ENCODE measurements at regions of chr4 and their contacts with region 1.

Region 1: GRCh38 chr4:102826890-102827673 is at the start of gene UBE2D3:
- DNase-seq: peak; percentile 45
- ATAC-seq: peak; percentile 58
- H3K4me3 ChIP-seq: peak within 1 kb of the TSS; percentile 89
- H3K27ac ChIP-seq: peak within 1 kb of the TSS; percentile 99
- H3K4me1 ChIP-seq: peaks cover 4% of the 10 kb centered on the region; the same call in 1 of the 2 replicates
- H3K27me3 ChIP-seq: no peaks in the 10 kb centered on the region
- CTCF ChIP-seq: peak; percentile 7 to 27 (median 15); a peak in 3 of 6 replicates
- EP300 ChIP-seq: peak; percentile 33 to 41; a peak in 2 of 4 replicates
- POLR2A ChIP-seq: peak; percentile 93
- RAD21 ChIP-seq: 0 out of 2 replicates have a peak, but pooled peaks have one; percentile 7
- polyA plus RNA-seq, gene UBE2D3: 162 to 186 TPM

Region 2: GRCh38 chr4:102344954-102345794 is 481.9 kb before region 1 on chr4 and contains the start of gene SLC39A8:
- CTCF ChIA-PET with region 1: interaction called, 3 read pairs
- POLR2A ChIA-PET with region 1: no interaction called
- RAD21 ChIA-PET with region 1: no interaction called
- SMC1A ChIA-PET with region 1: no interaction called
- in situ Hi-C with region 1: no loop called
- intact Hi-C with region 1: loop called (anchors 10 kb)
- DNase-seq: peak; percentile 91
- ATAC-seq: peak; percentile 87
- H3K4me3 ChIP-seq: peak within 1 kb of the TSS; percentile 72
- H3K27ac ChIP-seq: peak within 1 kb of the TSS; percentile 87
- H3K4me1 ChIP-seq: peaks cover 11% of the 10 kb centered on the region
- H3K27me3 ChIP-seq: no peaks in the 10 kb centered on the region
- CTCF ChIP-seq: peak; percentile 84 to 87 (median 86)
- EP300 ChIP-seq: peak; percentile 42 to 69; a peak in 3 of 4 replicates
- POLR2A ChIP-seq: peak; percentile 66
- RAD21 ChIP-seq: peak; percentile 54
- polyA plus RNA-seq, gene SLC39A8: 7.9 to 16.6 TPM

Region 3: DNA sequence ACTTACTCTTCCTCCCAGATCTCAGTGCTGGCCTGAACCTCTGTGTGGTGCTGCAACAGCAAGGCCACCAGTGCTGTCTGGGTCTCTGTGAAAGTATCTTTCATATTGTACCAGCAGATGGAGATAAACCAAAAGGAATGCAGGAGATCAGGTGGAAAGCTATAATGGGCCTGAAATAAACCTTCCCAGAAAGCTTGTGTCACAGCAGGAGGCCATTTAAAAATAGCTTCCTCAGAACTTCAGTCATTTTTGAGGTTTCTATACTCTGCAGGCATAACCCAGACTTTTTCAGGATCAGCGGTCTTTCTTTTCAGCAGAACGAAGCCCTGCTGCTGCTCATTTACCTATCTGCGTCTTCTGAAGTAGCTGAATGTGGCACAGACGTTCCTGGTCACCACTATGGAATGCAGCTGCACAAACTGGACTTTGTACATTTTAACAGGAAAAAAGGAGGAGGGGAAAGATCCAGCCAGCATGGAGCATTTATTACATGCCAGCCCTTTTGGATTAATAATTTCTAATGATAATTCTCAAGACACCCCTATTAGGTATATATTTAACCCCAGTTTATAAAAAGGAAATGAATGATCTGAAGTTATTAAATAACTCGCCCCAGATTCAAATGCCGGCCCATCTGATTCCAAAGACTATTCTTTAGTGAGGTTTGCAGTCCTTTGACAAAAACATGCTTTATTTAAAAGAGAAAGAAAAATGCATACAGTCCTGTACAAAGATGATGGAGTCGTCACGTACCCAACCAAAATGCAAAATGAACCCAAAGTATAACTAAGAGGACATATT is 206.2 kb before region 1 on chr4:
- CTCF ChIA-PET with region 1: interaction called, 10 read pairs
- POLR2A ChIA-PET with region 1: interaction called, 3 read pairs
- RAD21 ChIA-PET with region 1: interaction called, 3 read pairs
- SMC1A ChIA-PET with region 1: interaction called, 5 read pairs
- in situ Hi-C with region 1: no loop called
- intact Hi-C with region 1: no loop called
- DNase-seq: no peak
- ATAC-seq: peak; percentile 70
- H3K4me3 ChIP-seq: no peak overlapping the region
- H3K27ac ChIP-seq: no peak overlapping the region
- H3K4me1 ChIP-seq: peaks cover 3% of the 10 kb centered on the region; the same call in 1 of the 2 replicates
- H3K27me3 ChIP-seq: no peaks in the 10 kb centered on the region
- CTCF ChIP-seq: peak; percentile 30 to 51 (median 45); a peak in 5 of 6 replicates
- EP300 ChIP-seq: no peak
- POLR2A ChIP-seq: no peak
- RAD21 ChIP-seq: peak; percentile 78

Region 4: DNA sequence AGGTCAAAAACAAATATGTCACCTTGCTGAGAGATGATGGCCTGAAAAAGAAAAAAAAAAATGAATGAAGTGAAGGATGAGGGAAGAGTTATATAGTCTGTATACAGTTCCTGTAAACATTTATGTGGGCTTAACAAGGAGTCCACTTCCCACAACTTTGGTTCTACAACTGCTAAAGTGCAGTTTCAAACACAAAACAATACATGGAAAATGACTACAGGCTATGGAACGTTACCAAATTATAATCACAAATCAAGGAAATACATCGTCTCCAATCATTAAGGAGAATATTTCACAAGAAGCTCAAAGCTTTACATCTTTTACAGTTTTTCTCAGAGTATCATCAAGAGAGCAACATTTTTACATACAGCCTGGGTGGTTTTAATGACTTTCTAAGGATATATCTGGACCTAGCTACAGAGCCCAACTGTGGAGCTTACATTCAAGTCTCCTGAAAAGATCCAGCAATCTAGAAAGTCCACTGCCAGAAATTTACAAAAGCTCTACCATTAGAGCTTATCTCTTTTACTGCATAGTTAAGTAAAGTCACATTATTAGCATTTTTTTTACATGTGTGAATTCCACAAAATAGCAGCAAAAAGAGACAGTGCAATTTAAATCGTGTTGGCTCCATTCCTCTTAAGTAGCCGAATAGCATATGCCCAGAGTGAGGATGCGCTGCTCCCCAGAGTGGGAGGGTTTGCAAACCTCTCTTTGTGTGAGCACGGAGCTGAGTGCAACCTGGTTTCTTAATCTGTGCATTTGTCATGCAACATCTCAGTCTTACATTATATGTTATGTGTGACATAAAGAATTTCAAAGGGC is 194.6 kb before region 1 on chr4:
- CTCF ChIA-PET with region 1: no interaction called
- POLR2A ChIA-PET with region 1: no interaction called
- RAD21 ChIA-PET with region 1: no interaction called
- SMC1A ChIA-PET with region 1: no interaction called
- in situ Hi-C with region 1: no loop called
- intact Hi-C with region 1: no loop called
- DNase-seq: no peak
- ATAC-seq: no peak
- H3K4me3 ChIP-seq: no peak overlapping the region
- H3K27ac ChIP-seq: no peak overlapping the region
- H3K4me1 ChIP-seq: no peaks in the 10 kb centered on the region
- H3K27me3 ChIP-seq: no peaks in the 10 kb centered on the region
- CTCF ChIP-seq: no peak
- EP300 ChIP-seq: no peak
- POLR2A ChIP-seq: no peak
- RAD21 ChIP-seq: no peak

Region 5: DNA sequence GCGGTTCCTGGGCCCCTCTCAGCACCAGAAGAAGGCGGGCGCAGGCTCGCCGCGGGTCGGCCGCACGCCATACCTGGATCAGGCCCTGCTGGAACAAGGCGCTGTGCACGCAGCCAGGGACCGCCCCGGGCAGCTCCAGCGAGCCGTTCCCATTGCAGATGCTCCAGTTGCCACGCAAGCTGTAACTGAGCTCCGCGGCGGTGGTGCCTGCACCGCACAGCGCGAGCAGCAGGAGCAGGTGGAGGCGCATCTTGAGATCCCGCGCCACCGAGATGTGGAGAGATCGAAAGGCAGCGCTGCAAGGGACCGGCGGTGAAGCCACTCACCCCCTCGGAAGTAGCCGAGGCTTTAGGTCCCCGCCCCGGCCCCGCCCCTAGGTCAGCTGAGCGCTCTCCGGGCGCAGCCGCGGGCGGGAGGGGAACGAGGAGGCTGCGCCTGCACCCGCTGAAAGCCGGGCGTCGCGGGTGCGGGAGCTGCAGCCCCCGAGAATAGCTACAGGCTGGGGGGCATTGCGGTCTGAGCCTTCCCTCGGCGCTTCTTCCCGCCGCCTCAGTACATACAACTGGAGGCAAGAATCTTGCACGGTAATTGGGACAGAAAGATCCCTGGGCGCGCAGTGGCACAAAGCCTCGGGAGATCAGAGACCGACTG is 66.3 kb before region 1 on chr4 and contains the start of gene MANBA:
- CTCF ChIA-PET with region 1: interaction called, 6 read pairs
- POLR2A ChIA-PET with region 1: interaction called, 11 read pairs
- RAD21 ChIA-PET with region 1: interaction called, 8 read pairs
- SMC1A ChIA-PET with region 1: interaction called, 12 read pairs
- in situ Hi-C with region 1: no loop called
- intact Hi-C with region 1: no loop called
- DNase-seq: no peak
- ATAC-seq: peak; percentile 94
- H3K4me3 ChIP-seq: peak within 1 kb of the TSS; percentile 98
- H3K27ac ChIP-seq: peak within 1 kb of the TSS; percentile 85
- H3K4me1 ChIP-seq: no peaks in the 10 kb centered on the region; the same call in 1 of the 2 replicates
- H3K27me3 ChIP-seq: no peaks in the 10 kb centered on the region
- CTCF ChIP-seq: no peak
- EP300 ChIP-seq: no peak
- POLR2A ChIP-seq: peak; percentile 97
- RAD21 ChIP-seq: no peak
- polyA plus RNA-seq, gene MANBA: 3.8 to 6.9 TPM

Region 6: GRCh38 chr4:102815981-102816380 is 11.1 kb before region 1 on chr4:
- CTCF ChIA-PET with region 1: interaction called, 37 read pairs
- POLR2A ChIA-PET with region 1: interaction called, 121 read pairs
- RAD21 ChIA-PET with region 1: interaction called, 35 read pairs
- SMC1A ChIA-PET with region 1: interaction called, 72 read pairs
- in situ Hi-C with region 1: no loop called
- intact Hi-C with region 1: no loop called
- DNase-seq: no peak
- ATAC-seq: no peak
- H3K4me3 ChIP-seq: no peak overlapping the region; the same call in 1 of the 2 replicates
- H3K27ac ChIP-seq: no peak overlapping the region
- H3K4me1 ChIP-seq: peaks cover 5% of the 10 kb centered on the region
- H3K27me3 ChIP-seq: no peaks in the 10 kb centered on the region
- CTCF ChIP-seq: no peak
- EP300 ChIP-seq: no peak
- POLR2A ChIP-seq: no peak
- RAD21 ChIP-seq: no peak

Region 7: GRCh38 chr4:102945066-102945465 is 118.0 kb after region 1 on chr4:
- CTCF ChIA-PET with region 1: no interaction called
- POLR2A ChIA-PET with region 1: no interaction called
- RAD21 ChIA-PET with region 1: no interaction called
- SMC1A ChIA-PET with region 1: no interaction called
- in situ Hi-C with region 1: no loop called
- intact Hi-C with region 1: no loop called
- DNase-seq: no peak
- ATAC-seq: no peak
- H3K4me3 ChIP-seq: no peak overlapping the region
- H3K27ac ChIP-seq: no peak overlapping the region
- H3K4me1 ChIP-seq: no peaks in the 10 kb centered on the region
- H3K27me3 ChIP-seq: no peaks in the 10 kb centered on the region
- CTCF ChIP-seq: no peak
- EP300 ChIP-seq: no peak
- POLR2A ChIP-seq: no peak
- RAD21 ChIP-seq: no peak

Region 8: GRCh38 chr4:103008875-103009729 is 182.0 kb after region 1 on chr4:
- CTCF ChIA-PET with region 1: interaction called, 7 read pairs
- POLR2A ChIA-PET with region 1: no interaction called
- RAD21 ChIA-PET with region 1: interaction called, 8 read pairs
- SMC1A ChIA-PET with region 1: interaction called, 6 read pairs
- in situ Hi-C with region 1: loop called (anchors 25 kb)
- intact Hi-C with region 1: loop called (anchors 2 kb)
- DNase-seq: peak; percentile 46
- ATAC-seq: peak; percentile 96
- H3K4me3 ChIP-seq: no peak overlapping the region
- H3K27ac ChIP-seq: no peak overlapping the region
- H3K4me1 ChIP-seq: no peaks in the 10 kb centered on the region
- H3K27me3 ChIP-seq: no peaks in the 10 kb centered on the region
- CTCF ChIP-seq: peak; percentile 59 to 82 (median 64)
- EP300 ChIP-seq: no peak
- POLR2A ChIP-seq: no peak
- RAD21 ChIP-seq: peak; percentile 97

Region 9: DNA sequence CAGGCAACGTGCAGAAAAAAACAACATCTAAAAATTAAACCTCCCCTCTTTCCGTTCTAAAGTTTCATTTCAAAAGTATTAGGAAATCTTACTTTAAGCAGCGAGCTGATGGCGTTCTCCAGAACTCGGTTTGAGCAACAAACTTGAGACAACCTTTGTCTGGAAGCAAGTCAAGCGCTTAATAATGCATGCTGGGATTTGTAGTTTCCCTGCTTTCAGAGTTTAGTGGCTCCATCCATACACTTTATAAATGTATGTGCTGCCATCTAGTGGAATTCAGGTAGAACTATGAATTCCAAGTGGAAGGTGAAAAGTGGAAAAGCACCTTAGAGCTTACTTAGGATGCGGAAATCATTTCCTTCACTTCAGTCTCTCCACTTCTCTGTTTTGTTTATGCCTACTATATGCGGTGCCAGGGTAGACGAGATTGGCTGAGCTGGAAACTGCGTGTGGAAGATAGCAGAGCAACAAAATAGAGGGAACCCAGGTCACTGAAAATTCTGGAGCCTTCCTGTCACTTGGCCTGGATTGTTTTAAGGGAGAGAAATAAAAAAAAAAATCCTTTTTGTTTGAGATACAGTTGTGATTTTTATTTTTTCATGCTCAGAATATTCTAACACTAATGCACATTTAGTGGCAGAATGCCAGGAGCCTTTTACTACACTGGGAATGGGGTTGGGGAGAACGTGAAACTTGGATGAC is 272.8 kb after region 1 on chr4 and contains the start of gene BDH2:
- CTCF ChIA-PET with region 1: no interaction called
- POLR2A ChIA-PET with region 1: no interaction called
- RAD21 ChIA-PET with region 1: interaction called, 13 read pairs
- SMC1A ChIA-PET with region 1: interaction called, 3 read pairs
- in situ Hi-C with region 1: no loop called
- intact Hi-C with region 1: loop called (anchors 5 kb)
- DNase-seq: peak; percentile 72
- ATAC-seq: peak; percentile 97
- H3K4me3 ChIP-seq: peak within 1 kb of the TSS; percentile 74
- H3K27ac ChIP-seq: peak within 1 kb of the TSS; percentile 57; the same call in 1 of the 2 replicates
- H3K4me1 ChIP-seq: peaks cover 4% of the 10 kb centered on the region; the same call in 1 of the 2 replicates
- H3K27me3 ChIP-seq: no peaks in the 10 kb centered on the region
- CTCF ChIP-seq: peak; percentile 57 to 86 (median 71); a peak in 5 of 6 replicates
- EP300 ChIP-seq: no peak
- POLR2A ChIP-seq: 0 out of 2 replicates have a peak, but pooled peaks have one; percentile 35
- RAD21 ChIP-seq: peak; percentile 81
- polyA plus RNA-seq, gene BDH2: 41.0 to 47.3 TPM